ENCODE measurements at regions of chr1 and their contacts with region 1.

Region 1: GRCh38 chr1:147640553-147641165 is 29.7 kb downstream of the ACP6 start:
- DNase-seq: peak in 1 of 2 experiments; percentile 69
- H3K4me3 ChIP-seq: no peak overlapping the region
- H3K27ac ChIP-seq: no peak overlapping the region
- H3K4me1 ChIP-seq: peaks cover 8% of the 10 kb centered on the region; the same call in 1 of the 2 replicates
- H3K27me3 ChIP-seq: no peaks in the 10 kb centered on the region
- CTCF ChIP-seq: peak; percentile 83

Region 2: GRCh38 chr1:146049436-146049835 is 1591.2 kb before region 1 on chr1:
- CTCF ChIA-PET with region 1: no interaction called
- POLR2A ChIA-PET with region 1: no interaction called
- intact Hi-C with region 1: no loop called
- DNase-seq: no peak
- H3K4me3 ChIP-seq: no peak overlapping the region
- H3K27ac ChIP-seq: no peak overlapping the region
- H3K4me1 ChIP-seq: peaks cover 8% of the 10 kb centered on the region; the same call in 1 of the 2 replicates
- H3K27me3 ChIP-seq: no peaks in the 10 kb centered on the region
- CTCF ChIP-seq: no peak

Region 3: GRCh38 chr1:147273409-147274336 is 367.0 kb before region 1 on chr1:
- CTCF ChIA-PET with region 1: no interaction called
- POLR2A ChIA-PET with region 1: no interaction called
- intact Hi-C with region 1: loop called (anchors 5 kb)
- DNase-seq: peak; percentile 13 to 69
- H3K4me3 ChIP-seq: no peak overlapping the region
- H3K27ac ChIP-seq: peak overlapping the region; percentile 89
- H3K4me1 ChIP-seq: peaks cover 12% of the 10 kb centered on the region
- H3K27me3 ChIP-seq: no peaks in the 10 kb centered on the region
- CTCF ChIP-seq: peak; percentile 62

Region 4: GRCh38 chr1:147515046-147515869 is 125.4 kb before region 1 on chr1:
- CTCF ChIA-PET with region 1: no interaction called
- POLR2A ChIA-PET with region 1: no interaction called
- intact Hi-C with region 1: loop called (anchors 1 kb)
- DNase-seq: peak; percentile 48 to 99
- H3K4me3 ChIP-seq: peak overlapping the region; percentile 39
- H3K27ac ChIP-seq: peak overlapping the region; percentile 73
- H3K4me1 ChIP-seq: peaks cover 39% of the 10 kb centered on the region
- H3K27me3 ChIP-seq: no peaks in the 10 kb centered on the region
- CTCF ChIP-seq: peak; percentile 64

Region 5: GRCh38 chr1:147627435-147628110 is 13.1 kb before region 1 on chr1:
- CTCF ChIA-PET with region 1: no interaction called
- POLR2A ChIA-PET with region 1: no interaction called
- intact Hi-C with region 1: loop called (anchors 2 kb)
- DNase-seq: peak in 1 of 2 experiments; percentile 25
- H3K4me3 ChIP-seq: no peak overlapping the region
- H3K27ac ChIP-seq: 0 out of 2 replicates have a peak overlapping the region, but pooled peaks have one; percentile 9
- H3K4me1 ChIP-seq: no peaks in the 10 kb centered on the region
- H3K27me3 ChIP-seq: no peaks in the 10 kb centered on the region
- CTCF ChIP-seq: peak; percentile 94

Region 6: DNA sequence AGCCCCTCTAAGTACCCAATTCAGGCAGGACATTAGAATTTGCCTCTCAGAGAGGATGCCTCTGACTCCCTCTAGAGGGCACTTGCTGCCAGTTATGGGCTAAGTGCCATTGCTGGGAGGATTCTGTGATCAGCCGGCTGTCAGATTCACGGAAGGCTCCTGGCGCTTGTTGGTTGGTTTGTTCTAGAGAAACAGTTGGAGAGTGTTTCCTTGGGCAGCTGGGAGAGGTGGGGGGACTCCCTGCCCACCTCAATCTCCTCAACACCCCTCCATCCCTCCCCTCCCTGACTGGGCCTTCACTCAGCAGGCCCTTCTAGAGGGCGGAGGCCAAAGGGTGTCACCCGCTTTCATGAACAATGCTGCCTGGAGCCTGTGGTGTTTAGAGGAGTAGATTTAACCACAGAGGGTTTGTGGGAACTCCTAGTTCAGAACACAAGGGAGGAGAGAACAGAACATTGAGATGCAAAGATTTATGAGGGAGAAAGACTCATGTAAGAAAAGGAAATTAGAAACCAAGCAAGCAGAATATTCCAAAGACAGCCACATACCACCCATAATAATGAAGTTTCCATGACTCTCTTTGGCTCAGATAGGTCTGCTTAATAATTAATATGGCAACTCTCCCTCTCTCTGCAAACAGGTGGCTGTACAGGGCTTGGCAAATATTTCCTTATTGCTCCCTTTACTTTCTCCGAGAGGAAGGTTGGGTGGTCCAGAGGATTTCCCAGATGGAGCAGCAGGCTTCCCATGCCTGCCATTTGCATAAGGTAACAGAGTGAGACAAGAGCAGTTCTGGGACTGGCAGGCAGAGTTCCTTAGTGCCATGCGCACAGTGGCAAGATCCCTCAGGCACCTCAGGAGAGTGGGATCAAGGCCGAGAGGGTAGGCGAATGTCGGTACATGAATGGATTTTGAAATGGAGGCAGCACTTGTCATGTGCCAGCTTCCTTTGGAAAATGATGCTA is 59.7 kb after region 1 on chr1:
- CTCF ChIA-PET with region 1: interaction called, 4 read pairs
- POLR2A ChIA-PET with region 1: no interaction called
- intact Hi-C with region 1: loop called (anchors 1 kb)
- DNase-seq: peak in 1 of 2 experiments; percentile 59
- H3K4me3 ChIP-seq: no peak overlapping the region
- H3K27ac ChIP-seq: no peak overlapping the region
- H3K4me1 ChIP-seq: no peaks in the 10 kb centered on the region
- H3K27me3 ChIP-seq: no peaks in the 10 kb centered on the region
- CTCF ChIP-seq: peak; percentile 84

Region 7: GRCh38 chr1:147723691-147724323 is 83.1 kb after region 1 on chr1:
- CTCF ChIA-PET with region 1: no interaction called
- POLR2A ChIA-PET with region 1: no interaction called
- intact Hi-C with region 1: no loop called
- DNase-seq: peak in 1 of 2 experiments; percentile 46
- H3K4me3 ChIP-seq: no peak overlapping the region
- H3K27ac ChIP-seq: no peak overlapping the region
- H3K4me1 ChIP-seq: peaks cover 58% of the 10 kb centered on the region
- H3K27me3 ChIP-seq: no peaks in the 10 kb centered on the region
- CTCF ChIP-seq: peak; percentile 51

Region 8: DNA sequence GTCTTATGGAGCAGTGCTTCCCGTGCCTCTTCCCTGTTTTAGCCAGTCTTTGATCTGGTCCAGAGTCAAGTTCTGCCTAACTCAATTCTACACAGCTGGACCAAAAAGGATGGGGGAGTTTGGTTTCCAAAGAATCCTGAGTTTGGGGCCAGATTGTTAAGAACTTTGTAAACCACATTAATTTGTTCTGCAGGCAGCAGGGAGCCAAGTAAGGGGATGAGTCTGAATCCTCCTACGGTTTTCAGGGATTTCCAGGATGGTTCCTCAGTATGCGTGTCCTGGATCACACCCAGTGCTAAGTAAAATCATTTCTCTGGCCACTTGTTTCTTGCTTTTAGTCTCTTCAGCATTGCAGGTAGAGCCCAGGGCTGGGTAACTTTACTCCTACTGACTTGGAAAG is 145.9 kb after region 1 on chr1:
- CTCF ChIA-PET with region 1: no interaction called
- POLR2A ChIA-PET with region 1: no interaction called
- intact Hi-C with region 1: no loop called
- DNase-seq: no peak
- H3K4me3 ChIP-seq: no peak overlapping the region
- H3K27ac ChIP-seq: no peak overlapping the region
- H3K4me1 ChIP-seq: peaks cover 17% of the 10 kb centered on the region
- H3K27me3 ChIP-seq: no peaks in the 10 kb centered on the region
- CTCF ChIP-seq: no peak